ENCODE measurements at regions of chr4 and their contacts with region 1.

Region 1: DNA sequence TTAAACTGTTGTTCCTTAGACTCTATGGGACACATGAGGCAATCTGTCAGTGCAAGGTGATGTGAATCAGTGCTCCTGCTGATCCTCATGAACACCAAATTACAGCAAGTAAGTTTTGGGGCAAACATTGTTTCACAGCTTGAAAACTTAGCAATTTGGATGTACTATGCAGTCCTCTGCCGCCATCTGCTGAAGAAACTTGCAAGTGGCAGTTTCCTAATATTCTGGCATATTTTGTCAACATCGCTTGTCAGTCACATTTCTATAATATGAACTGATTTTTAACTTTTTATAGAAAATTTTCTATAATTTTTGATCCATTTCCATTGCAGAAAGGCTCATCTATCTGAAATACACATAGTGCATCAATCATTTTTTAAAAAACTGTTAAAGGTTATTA is 56.3 kb downstream of the ZAR1 start:
- DNase-seq: peak; percentile 4
- H3K4me3 ChIP-seq: no peak overlapping the region
- H3K27ac ChIP-seq: no peak overlapping the region
- H3K27me3 ChIP-seq: no peaks in the 10 kb centered on the region
- CTCF ChIP-seq: peak; percentile 75

Region 2: GRCh38 chr4:48127682-48128394 is 418.5 kb before region 1 on chr4:
- CTCF ChIA-PET with region 1: interaction called, 11 read pairs
- POLR2A ChIA-PET with region 1: no interaction called
- DNase-seq: peak; percentile 76
- H3K4me3 ChIP-seq: peak overlapping the region; percentile 22
- H3K27ac ChIP-seq: peak overlapping the region; percentile 52
- H3K27me3 ChIP-seq: peaks cover 3% of the 10 kb centered on the region
- CTCF ChIP-seq: peak; percentile 66

Region 3: GRCh38 chr4:48315728-48316630 is 230.4 kb before region 1 on chr4:
- CTCF ChIA-PET with region 1: interaction called, 10 read pairs
- POLR2A ChIA-PET with region 1: no interaction called
- DNase-seq: peak; percentile 39
- H3K4me3 ChIP-seq: no peak overlapping the region
- H3K27ac ChIP-seq: no peak overlapping the region
- H3K27me3 ChIP-seq: no peaks in the 10 kb centered on the region
- CTCF ChIP-seq: peak; percentile 78

Region 4: GRCh38 chr4:48445704-48446103 is 100.6 kb before region 1 on chr4:
- CTCF ChIA-PET with region 1: interaction called, 33 read pairs
- POLR2A ChIA-PET with region 1: no interaction called
- DNase-seq: no peak
- H3K4me3 ChIP-seq: no peak overlapping the region
- H3K27ac ChIP-seq: no peak overlapping the region
- H3K27me3 ChIP-seq: peaks cover 4% of the 10 kb centered on the region
- CTCF ChIP-seq: peak; percentile 50

Region 5: GRCh38 chr4:48493452-48494100 is 52.8 kb before region 1 on chr4:
- CTCF ChIA-PET with region 1: no interaction called
- POLR2A ChIA-PET with region 1: no interaction called
- DNase-seq: no peak
- H3K4me3 ChIP-seq: no peak overlapping the region
- H3K27ac ChIP-seq: no peak overlapping the region
- H3K27me3 ChIP-seq: peaks cover 30% of the 10 kb centered on the region
- CTCF ChIP-seq: no peak

Region 6: DNA sequence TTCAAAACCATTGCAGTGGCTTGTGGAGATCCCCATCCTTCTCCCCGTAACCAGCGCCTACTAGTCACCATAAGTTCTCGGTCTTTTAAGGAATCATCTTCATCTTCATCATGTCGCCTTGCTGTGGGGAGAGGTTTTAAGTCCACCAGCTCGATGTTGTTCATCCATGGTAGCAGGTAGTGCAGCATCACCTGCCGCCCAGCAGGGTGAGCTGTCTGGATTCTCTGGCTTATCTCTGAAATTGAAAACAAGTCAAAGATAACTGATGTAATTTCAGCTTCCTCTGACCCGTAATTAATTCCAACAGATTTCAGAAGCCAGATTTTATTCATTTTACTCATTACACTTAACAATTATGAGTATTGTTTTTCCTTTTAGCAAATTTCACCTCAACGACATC is 11.1 kb after region 1 on chr4:
- CTCF ChIA-PET with region 1: interaction called, 11 read pairs
- POLR2A ChIA-PET with region 1: no interaction called
- DNase-seq: no peak
- H3K4me3 ChIP-seq: no peak overlapping the region
- H3K27ac ChIP-seq: no peak overlapping the region
- H3K27me3 ChIP-seq: no peaks in the 10 kb centered on the region
- CTCF ChIP-seq: 0 out of 2 replicates have a peak, but pooled peaks have one; percentile 23

Measured in AG04450 (cell line).